OCI-LY7 (cell line): ENCODE measurements at regions of chr12 and their contacts with region 1.

Region 1: GRCh38 chr12:101830367-101831325 is at the start of gene GNPTAB:
- DNase-seq: peak; percentile 96
- H3K4me3 ChIP-seq: peak within 1 kb of the TSS; percentile 79
- H3K27ac ChIP-seq: peak within 1 kb of the TSS; percentile 70
- H3K4me1 ChIP-seq: peaks cover 49% of the 10 kb centered on the region
- CTCF ChIP-seq: peak; percentile 74
- total RNA-seq, gene GNPTAB: 35.8 and 38.9 TPM in 2 replicates

Region 2: GRCh38 chr12:101480849-101481248 is 349.8 kb before region 1 on chr12:
- CTCF ChIA-PET with region 1: no interaction called
- POLR2A ChIA-PET with region 1: interaction called, 10 read pairs
- intact Hi-C with region 1: no loop called
- DNase-seq: no peak
- H3K4me3 ChIP-seq: no peak overlapping the region
- H3K27ac ChIP-seq: no peak overlapping the region
- H3K4me1 ChIP-seq: no peaks in the 10 kb centered on the region
- CTCF ChIP-seq: no peak

Region 3: GRCh38 chr12:101697197-101697929 is 133.3 kb before region 1 on chr12 and contains the start of gene CHPT1:
- CTCF ChIA-PET with region 1: no interaction called
- POLR2A ChIA-PET with region 1: no interaction called
- intact Hi-C with region 1: loop called (anchors 5 kb)
- DNase-seq: peak; percentile 83
- H3K4me3 ChIP-seq: peak within 1 kb of the TSS; percentile 80
- H3K27ac ChIP-seq: peak within 1 kb of the TSS; percentile 56
- H3K4me1 ChIP-seq: peaks cover 45% of the 10 kb centered on the region
- CTCF ChIP-seq: no peak
- total RNA-seq, gene CHPT1: 33.6 and 56.6 TPM in 2 replicates

Region 4: DNA sequence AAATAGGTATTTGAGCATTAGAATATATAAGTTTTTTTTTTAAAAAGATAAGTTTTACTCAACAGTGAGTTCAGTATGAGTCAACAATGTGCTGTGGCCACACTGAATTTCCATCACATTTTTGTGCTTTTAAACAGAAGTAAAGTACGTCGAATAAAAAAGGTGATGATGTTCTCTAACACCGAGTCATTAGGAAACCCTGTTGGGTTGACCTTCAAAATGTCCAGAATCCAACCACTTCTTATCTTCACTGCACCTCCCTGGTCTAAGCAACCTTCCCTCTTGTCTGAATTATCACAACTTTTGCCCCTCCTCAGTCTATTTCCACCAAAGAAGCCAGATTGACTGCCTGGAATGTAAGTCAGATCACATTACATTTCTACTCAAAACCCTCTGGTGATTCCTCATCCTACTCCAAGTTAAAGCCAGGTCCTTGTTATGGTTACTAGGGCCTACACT is 48.3 kb before region 1 on chr12:
- CTCF ChIA-PET with region 1: interaction called, 7 read pairs
- POLR2A ChIA-PET with region 1: interaction called, 29 read pairs
- intact Hi-C with region 1: no loop called
- DNase-seq: no peak
- H3K4me3 ChIP-seq: no peak overlapping the region
- H3K27ac ChIP-seq: no peak overlapping the region
- H3K4me1 ChIP-seq: peaks cover 16% of the 10 kb centered on the region
- CTCF ChIP-seq: no peak